ENCODE measurements at regions of chr3 and their contacts with region 1.

Region 1: DNA sequence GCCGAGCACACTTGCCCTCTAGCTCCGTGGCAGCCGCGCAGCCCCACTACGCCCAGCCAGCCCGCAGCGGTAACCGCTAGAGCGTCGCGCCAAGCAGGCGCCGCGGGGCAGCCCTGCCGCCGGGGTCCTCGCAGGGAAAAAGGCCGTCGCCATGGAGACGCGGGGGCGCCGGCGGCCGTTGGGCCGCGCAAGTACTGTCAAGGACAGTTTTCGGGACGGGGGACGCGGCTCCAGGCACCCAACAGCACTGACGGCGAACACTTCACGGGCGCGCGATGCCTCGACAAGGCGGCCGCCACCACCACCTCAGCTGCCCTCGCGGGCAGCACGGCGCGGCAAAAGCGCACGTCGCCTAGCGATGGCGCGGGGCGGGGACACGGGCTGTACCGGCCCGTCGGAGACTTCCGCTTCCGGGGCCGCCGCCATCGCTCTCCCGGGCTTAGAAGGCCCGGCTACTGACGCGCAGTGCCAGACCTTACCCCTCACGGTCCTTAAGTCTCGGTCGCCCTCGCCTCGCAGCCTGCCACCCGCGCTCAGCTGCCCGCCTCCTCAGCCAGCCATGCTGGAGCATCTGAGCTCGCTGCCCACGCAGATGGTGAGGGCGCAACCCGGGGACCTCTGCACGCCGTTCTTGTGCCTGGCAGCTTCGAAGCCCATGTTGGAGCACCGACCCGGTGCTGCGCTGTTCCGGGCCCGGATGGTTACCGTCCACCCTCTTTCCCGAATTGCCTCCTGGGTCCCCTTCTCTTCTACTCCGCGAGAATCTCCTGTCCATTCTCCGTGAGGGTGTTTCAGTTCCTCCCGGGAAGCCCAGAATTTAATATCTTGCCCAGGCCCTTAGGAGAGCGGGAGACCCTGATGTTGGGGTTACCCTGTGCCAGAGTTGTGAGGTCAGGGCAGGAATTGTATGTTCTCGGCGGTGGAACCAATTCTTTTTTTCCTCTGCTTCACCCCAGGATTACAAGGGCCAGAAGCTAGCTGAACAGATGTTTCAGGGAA is at the starts of genes GLT8D1 and SPCS1:
- DNase-seq: peak; percentile 88 to 92 (median 91)
- H3K4me3 ChIP-seq: peak within 1 kb of the TSS; percentile 75 to 99
- H3K4me3 Mint-ChIP-seq: peak within 1 kb of the TSS; percentile 92 to 98 (median 96)
- H3K27ac ChIP-seq: peak within 1 kb of the TSS; percentile 87
- H3K27ac Mint-ChIP-seq: peak within 1 kb of the TSS; percentile 95 to 99 (median 97)
- H3K4me1 ChIP-seq: peaks cover 39% of the 10 kb centered on the region
- H3K4me1 Mint-ChIP-seq: peaks cover 16 to 41% (median 27%) of the 10 kb centered on the region in 4 donors
- H3K27me3 ChIP-seq: no peaks in the 10 kb centered on the region
- H3K27me3 Mint-ChIP-seq: no peaks in the 10 kb centered on the region
- total RNA-seq, gene GLT8D1: 49.7 to 49.9 TPM
- total RNA-seq, gene SPCS1: 90.5 to 94.7 TPM

Region 2: GRCh38 chr3:52313774-52314188 is 392.2 kb before region 1 on chr3:
- CTCF ChIA-PET with region 1: no interaction called
- POLR2A ChIA-PET with region 1: no interaction called
- intact Hi-C with region 1: no loop called
- DNase-seq: no peak
- H3K4me3 ChIP-seq: no peak overlapping the region
- H3K4me3 Mint-ChIP-seq: no peak overlapping the region
- H3K27ac ChIP-seq: no peak overlapping the region
- H3K27ac Mint-ChIP-seq: peak overlapping the region in 3 of 7 donors; percentile 31 to 74 (median 48)
- H3K4me1 ChIP-seq: peaks cover 26% of the 10 kb centered on the region
- H3K4me1 Mint-ChIP-seq: peaks cover 12 to 49% (median 23%) of the 10 kb centered on the region in 4 donors
- H3K27me3 ChIP-seq: no peaks in the 10 kb centered on the region
- H3K27me3 Mint-ChIP-seq: no peaks in the 10 kb centered on the region

Region 3: GRCh38 chr3:52536369-52537164 is 169.4 kb before region 1 on chr3 and contains the start of gene UQCC5:
- CTCF ChIA-PET with region 1: no interaction called
- POLR2A ChIA-PET with region 1: no interaction called
- intact Hi-C with region 1: loop called (anchors 1 kb)
- DNase-seq: peak; percentile 96 to 99 (median 98)
- H3K4me3 ChIP-seq: peak within 1 kb of the TSS; percentile 83 to 95
- H3K4me3 Mint-ChIP-seq: peak within 1 kb of the TSS; percentile 98 to 100 (median 100)
- H3K27ac ChIP-seq: peak within 1 kb of the TSS; percentile 74
- H3K27ac Mint-ChIP-seq: peak within 1 kb of the TSS; percentile 94 to 100 (median 99)
- H3K4me1 ChIP-seq: peaks cover 46% of the 10 kb centered on the region
- H3K4me1 Mint-ChIP-seq: peaks cover 24 to 68% (median 49%) of the 10 kb centered on the region in 4 donors
- H3K27me3 ChIP-seq: no peaks in the 10 kb centered on the region
- H3K27me3 Mint-ChIP-seq: no peaks in the 10 kb centered on the region
- total RNA-seq, gene UQCC5: 12.1 to 13.2 TPM

Region 4: GRCh38 chr3:52721002-52721729 is 15.2 kb after region 1 on chr3:
- CTCF ChIA-PET with region 1: no interaction called
- POLR2A ChIA-PET with region 1: interaction called, 16 read pairs
- intact Hi-C with region 1: no loop called
- DNase-seq: peak; percentile 33 to 41 (median 34)
- H3K4me3 ChIP-seq: no peak overlapping the region
- H3K4me3 Mint-ChIP-seq: peak overlapping the region; percentile 17 to 84 (median 55)
- H3K27ac ChIP-seq: peak overlapping the region; percentile 12
- H3K27ac Mint-ChIP-seq: peak overlapping the region; percentile 67 to 95 (median 75)
- H3K4me1 ChIP-seq: peaks cover 23% of the 10 kb centered on the region
- H3K4me1 Mint-ChIP-seq: peaks cover 16 to 28% (median 23%) of the 10 kb centered on the region in 4 donors
- H3K27me3 ChIP-seq: no peaks in the 10 kb centered on the region
- H3K27me3 Mint-ChIP-seq: no peaks in the 10 kb centered on the region

Region 5: DNA sequence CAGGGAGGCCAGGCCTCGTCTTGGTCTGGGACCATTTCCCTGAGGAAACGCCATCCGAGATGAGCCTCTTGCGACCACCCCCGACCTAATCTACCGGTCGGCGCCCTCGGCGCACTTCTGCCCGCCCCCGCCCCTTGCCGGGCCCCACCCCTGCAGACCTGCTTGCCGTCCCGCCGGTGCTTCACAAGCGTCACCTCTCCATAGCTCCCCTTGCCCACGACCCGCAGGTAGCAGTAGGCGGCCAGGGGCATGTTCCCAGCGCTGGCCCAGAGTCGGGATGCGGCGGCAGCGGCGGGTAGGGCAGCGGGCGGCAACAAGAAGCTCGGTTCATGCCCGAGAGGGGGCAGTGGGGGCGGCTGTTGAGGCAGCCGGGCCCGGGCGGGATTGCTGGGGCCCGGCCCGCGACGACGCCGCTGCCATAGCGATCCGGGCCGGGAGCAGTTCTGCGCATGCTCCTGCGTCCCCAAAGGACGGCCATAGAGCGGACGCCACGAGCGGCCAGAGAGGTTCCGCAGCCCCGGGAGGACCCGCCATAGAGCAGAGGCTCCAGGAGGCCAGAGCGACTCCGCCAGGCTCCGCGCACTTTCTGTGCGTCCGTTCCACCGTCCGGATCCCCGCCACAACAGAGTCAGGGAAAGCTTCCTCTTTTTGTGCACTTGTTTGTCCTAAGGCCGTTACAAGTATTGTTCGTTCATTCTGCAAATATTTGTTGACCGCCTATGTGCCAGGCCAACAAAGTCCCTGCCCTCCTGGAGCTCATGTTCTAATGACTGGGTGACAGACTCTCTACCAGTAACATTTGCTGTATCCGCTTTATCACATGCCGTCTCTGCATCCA is 64.7 kb after region 1 on chr3 and contains the start of gene NEK4:
- CTCF ChIA-PET with region 1: no interaction called
- POLR2A ChIA-PET with region 1: interaction called, 5 read pairs
- intact Hi-C with region 1: loop called (anchors 2 kb)
- DNase-seq: peak; percentile 72 to 84 (median 80)
- H3K4me3 ChIP-seq: peak within 1 kb of the TSS; percentile 53 to 56
- H3K4me3 Mint-ChIP-seq: peak within 1 kb of the TSS; percentile 96 to 100 (median 97)
- H3K27ac ChIP-seq: peak within 1 kb of the TSS; percentile 59
- H3K27ac Mint-ChIP-seq: peak within 1 kb of the TSS; percentile 88 to 98 (median 94)
- H3K4me1 ChIP-seq: peaks cover 17% of the 10 kb centered on the region
- H3K4me1 Mint-ChIP-seq: peaks cover 13 to 32% (median 20%) of the 10 kb centered on the region in 4 donors
- H3K27me3 ChIP-seq: no peaks in the 10 kb centered on the region
- H3K27me3 Mint-ChIP-seq: no peaks in the 10 kb centered on the region
- total RNA-seq, gene NEK4: 26.8 to 27.9 TPM

Region 6: DNA sequence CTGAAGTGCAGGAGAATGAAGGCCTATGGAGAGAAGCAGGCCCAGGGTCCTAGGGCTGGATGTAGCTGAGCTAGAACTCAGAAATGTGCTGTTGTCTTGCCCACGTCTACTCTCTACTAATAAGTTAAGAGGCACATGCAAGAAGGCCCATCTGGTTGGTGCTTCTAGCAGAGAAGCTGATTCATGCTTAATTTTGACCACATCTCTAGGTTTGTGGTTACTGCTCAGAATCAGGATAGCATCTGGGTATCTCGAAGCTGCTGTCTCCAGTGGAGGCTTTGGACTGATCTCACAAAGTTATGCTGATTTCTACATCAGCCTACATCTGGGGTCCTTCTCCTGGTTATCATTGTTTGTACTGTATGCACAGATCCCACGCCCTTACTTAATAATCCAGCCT is 875.7 kb after region 1 on chr3:
- CTCF ChIA-PET with region 1: no interaction called
- POLR2A ChIA-PET with region 1: no interaction called
- intact Hi-C with region 1: no loop called
- DNase-seq: no peak
- H3K4me3 ChIP-seq: no peak overlapping the region
- H3K4me3 Mint-ChIP-seq: no peak overlapping the region
- H3K27ac ChIP-seq: no peak overlapping the region
- H3K27ac Mint-ChIP-seq: no peak overlapping the region
- H3K4me1 ChIP-seq: no peaks in the 10 kb centered on the region
- H3K4me1 Mint-ChIP-seq: peaks cover 0 to 6% (median 3%) of the 10 kb centered on the region in 4 donors
- H3K27me3 ChIP-seq: no peaks in the 10 kb centered on the region
- H3K27me3 Mint-ChIP-seq: peaks cover 0 to 3% of the 10 kb centered on the region in 2 donors

Measured in CD4-positive, alpha-beta memory T cell (primary cell).